Mammary epithelial cell (primary cell): ENCODE measurements at regions of chr12 and their contacts with region 1.

Region 1: DNA sequence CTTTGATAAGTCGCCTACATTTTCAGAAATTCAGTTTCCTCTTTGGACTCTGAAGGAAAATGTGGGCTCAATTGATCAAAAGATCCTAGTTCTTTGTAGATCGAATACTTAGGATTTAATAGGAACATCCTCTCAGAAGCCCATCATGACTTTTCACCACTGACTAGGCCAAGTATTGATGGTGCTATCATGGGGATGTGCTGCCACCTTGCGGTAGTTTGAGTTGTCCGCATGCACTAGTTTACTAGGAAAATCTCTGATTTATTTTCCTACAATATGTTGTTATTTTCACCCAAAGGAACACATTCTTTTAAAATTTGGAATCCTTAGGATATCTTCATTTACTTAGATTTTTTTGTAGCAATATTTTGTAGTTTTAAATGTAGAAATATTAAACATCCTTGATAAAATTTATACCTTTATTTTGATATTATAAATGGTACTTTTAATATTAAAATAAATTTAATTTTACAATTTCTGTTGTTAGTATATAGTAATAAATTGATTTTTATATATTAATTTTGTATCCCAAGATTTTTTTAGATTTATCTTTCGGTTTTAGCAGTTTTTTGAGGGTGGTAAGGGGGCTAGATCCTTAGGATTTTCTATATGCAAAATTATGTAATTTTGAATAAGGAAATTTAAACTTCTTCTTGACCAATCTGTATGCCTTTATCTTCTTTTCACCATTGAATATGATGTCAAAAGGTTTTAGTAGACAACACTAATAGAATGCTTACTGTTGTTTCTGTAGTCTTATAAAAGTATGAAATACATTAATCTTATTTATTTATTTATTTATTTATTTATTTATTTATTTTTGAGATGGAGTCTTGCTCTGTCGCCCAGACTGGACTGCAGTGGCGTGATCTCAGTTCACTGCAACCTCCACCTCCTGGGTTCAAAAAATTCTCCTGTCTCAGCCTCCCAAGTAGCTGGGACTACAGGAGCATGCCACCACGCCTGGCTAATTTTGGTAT is 52.9 kb upstream of the OR9K2 start:
- DNase-seq: peak; percentile 36
- H3K4me3 ChIP-seq: no peak overlapping the region
- H3K27ac ChIP-seq: no peak overlapping the region
- H3K4me1 ChIP-seq: no peaks in the 10 kb centered on the region
- H3K27me3 ChIP-seq: peaks cover 4% of the 10 kb centered on the region
- CTCF ChIP-seq: peak; percentile 81 to 83

Region 2: DNA sequence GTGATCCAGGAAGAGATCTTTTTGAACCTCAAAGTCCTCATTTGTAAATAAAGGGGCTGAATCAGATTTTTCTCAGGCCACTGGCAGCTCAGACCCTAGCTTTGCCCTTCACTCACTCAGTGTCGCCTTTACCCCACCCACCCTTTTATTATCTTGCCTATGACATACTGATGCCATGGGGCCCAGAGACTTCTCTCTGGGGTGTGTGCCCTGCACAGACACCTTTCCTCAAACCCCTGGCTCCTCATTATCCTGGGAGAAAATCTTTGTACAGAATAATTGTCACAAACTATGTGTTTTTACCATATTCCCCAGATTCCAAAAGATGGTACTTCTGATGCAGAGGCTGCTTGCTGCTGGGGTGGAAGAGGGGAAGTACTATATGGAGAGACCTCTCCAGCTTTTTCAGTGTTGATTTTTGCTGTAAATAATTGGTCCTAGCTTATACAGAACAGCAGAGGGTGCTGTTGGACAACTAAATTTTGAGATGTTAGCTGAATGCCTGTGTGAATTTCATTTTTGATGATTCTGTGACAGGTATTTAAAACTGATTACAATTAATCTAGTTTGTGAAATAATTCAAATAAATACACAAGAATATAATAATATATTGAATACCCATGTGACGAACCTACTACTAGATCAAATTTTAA is 371.3 kb before region 1 on chr12:
- CTCF ChIA-PET with region 1: no interaction called
- dilution Hi-C with region 1: no loop called
- in situ Hi-C with region 1: no loop called
- intact Hi-C with region 1: loop called (anchors 5 kb)
- DNase-seq: peak; percentile 12
- H3K4me3 ChIP-seq: no peak overlapping the region
- H3K27ac ChIP-seq: no peak overlapping the region
- H3K4me1 ChIP-seq: no peaks in the 10 kb centered on the region
- H3K27me3 ChIP-seq: no peaks in the 10 kb centered on the region
- CTCF ChIP-seq: peak; percentile 51 to 61

Region 3: GRCh38 chr12:54759751-54760150 is 313.6 kb before region 1 on chr12:
- CTCF ChIA-PET with region 1: interaction called, 4 read pairs
- dilution Hi-C with region 1: no loop called
- in situ Hi-C with region 1: loop called in 1 of 2 experiments (anchors 5 kb)
- intact Hi-C with region 1: loop called (anchors 1 kb)
- DNase-seq: peak; percentile 52
- H3K4me3 ChIP-seq: no peak overlapping the region
- H3K27ac ChIP-seq: no peak overlapping the region
- H3K4me1 ChIP-seq: no peaks in the 10 kb centered on the region
- H3K27me3 ChIP-seq: no peaks in the 10 kb centered on the region
- CTCF ChIP-seq: peak; percentile 43 to 70

Region 4: GRCh38 chr12:54993161-54993835 is 80.0 kb before region 1 on chr12:
- CTCF ChIA-PET with region 1: interaction called, 13 read pairs
- dilution Hi-C with region 1: loop called (anchors 5 kb)
- in situ Hi-C with region 1: loop called (anchors 5 kb)
- intact Hi-C with region 1: loop called (anchors 1 kb)
- DNase-seq: peak; percentile 41
- H3K4me3 ChIP-seq: no peak overlapping the region
- H3K27ac ChIP-seq: no peak overlapping the region
- H3K4me1 ChIP-seq: no peaks in the 10 kb centered on the region
- H3K27me3 ChIP-seq: no peaks in the 10 kb centered on the region
- CTCF ChIP-seq: peak; percentile 77 to 83

Region 5: DNA sequence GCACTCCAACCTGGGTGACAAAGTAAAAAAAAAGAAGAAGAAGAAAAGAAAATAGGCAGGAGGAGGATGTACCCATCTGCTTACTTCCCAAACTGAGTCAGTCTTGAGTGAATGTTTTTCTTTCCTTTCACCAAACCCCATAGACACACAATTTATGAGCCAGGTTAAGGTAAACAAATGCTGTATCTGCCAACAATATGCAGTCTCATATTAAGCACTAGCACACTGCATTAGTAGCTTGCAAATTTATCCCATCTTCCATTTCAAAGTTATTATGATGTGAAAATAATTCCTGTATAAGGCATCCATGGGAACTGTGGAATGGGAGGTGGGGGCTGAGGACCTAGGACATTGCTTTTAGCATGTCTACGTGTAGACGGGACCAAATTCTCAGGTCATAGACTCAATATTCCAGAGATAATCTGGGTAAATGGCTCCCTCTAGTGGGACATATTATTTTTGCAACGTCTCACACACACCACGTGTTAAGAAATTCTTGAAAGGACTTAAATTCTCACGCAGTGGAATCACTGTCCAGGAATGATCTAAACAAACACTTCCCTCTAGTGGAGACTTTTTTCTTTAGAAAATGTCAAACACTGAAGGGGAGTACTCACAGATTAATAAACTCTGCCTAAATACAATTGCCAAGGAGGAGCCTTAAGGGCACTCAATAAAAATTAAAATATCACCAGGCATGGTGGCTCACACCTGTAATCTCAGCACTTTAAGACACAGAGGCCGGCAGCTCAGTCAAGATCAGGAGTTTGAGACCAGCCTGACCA is 546.2 kb after region 1 on chr12:
- CTCF ChIA-PET with region 1: no interaction called
- dilution Hi-C with region 1: no loop called
- in situ Hi-C with region 1: no loop called
- intact Hi-C with region 1: loop called (anchors 5 kb)
- DNase-seq: peak; percentile 83
- H3K4me3 ChIP-seq: no peak overlapping the region
- H3K27ac ChIP-seq: no peak overlapping the region
- H3K4me1 ChIP-seq: no peaks in the 10 kb centered on the region
- H3K27me3 ChIP-seq: no peaks in the 10 kb centered on the region
- CTCF ChIP-seq: peak; percentile 71 to 72

Region 6: DNA sequence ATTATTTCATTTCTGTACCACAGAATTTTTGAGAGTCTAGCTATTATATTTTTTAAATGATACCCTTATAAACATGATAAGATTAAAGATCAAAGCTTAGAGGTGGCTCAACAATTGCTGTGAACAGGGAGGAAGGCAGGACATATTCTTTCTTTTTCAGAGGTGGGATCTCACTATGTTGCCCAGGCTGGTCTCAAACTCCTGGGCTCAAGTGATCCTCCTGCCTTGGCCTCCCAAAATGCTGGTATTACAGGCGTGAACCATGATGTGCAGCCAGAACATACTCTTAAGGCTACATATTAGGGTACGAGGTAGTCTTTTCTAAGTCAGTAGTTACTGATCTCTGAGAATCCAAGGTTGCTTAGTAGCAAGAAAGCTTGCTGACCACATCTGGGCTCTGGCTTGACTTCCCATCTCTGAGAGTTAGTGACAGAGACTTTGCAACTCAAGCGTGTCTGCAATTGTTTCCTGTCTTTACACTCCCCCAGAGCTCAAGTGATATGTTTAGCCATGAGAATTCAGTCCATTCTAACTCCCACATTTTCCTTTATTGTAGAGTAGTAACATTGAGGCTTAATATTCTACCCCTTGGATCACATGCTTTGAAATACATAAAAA is 909.1 kb after region 1 on chr12:
- CTCF ChIA-PET with region 1: no interaction called
- dilution Hi-C with region 1: no loop called
- in situ Hi-C with region 1: no loop called
- intact Hi-C with region 1: no loop called
- DNase-seq: no peak
- H3K4me3 ChIP-seq: no peak overlapping the region
- H3K27ac ChIP-seq: no peak overlapping the region
- H3K4me1 ChIP-seq: peaks cover 7% of the 10 kb centered on the region
- H3K27me3 ChIP-seq: no peaks in the 10 kb centered on the region
- CTCF ChIP-seq: no peak